Adrenal gland (tissue), 19 donors: ENCODE measurements at regions of chr6 and their contacts with region 1.

Region 1: DNA sequence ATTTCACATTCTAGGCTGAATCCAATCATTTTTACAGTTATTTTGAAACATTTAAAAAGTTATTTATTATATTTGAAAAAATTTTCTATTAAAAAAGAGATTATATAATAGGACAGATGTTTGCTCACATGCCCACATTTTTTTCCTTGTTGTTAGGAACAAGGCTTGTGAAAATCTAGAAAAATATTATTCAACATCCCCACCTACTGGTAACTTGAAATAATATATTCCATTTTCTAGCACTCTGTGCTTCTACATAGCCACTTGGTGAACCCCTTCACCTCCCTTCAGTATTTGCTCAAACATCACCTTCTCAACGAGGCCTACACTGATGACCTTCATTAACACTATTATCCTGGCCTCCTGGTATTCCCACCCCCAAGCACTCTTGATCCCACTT is 18.3 kb upstream of the GPRC6A start:
- DNase-seq: no peak
- H3K4me3 ChIP-seq: no peak overlapping the region
- H3K27ac ChIP-seq: no peak overlapping the region
- H3K4me1 ChIP-seq: no peaks in the 10 kb centered on the region
- H3K27me3 ChIP-seq: no peaks in the 10 kb centered on the region
- CTCF ChIP-seq: peak; percentile 22 to 56 (median 43)
- POLR2A ChIP-seq: no peak

Region 2: GRCh38 chr6:116779573-116780164 is 67.6 kb before region 1 on chr6:
- intact Hi-C with region 1: loop called (anchors 2 to 10 kb)
- DNase-seq: no peak
- H3K4me3 ChIP-seq: peak overlapping the region in 1 of 4 donors; percentile 2
- H3K27ac ChIP-seq: no peak overlapping the region
- H3K4me1 ChIP-seq: no peaks in the 10 kb centered on the region
- H3K27me3 ChIP-seq: no peaks in the 10 kb centered on the region
- CTCF ChIP-seq: peak; percentile 38 to 65 (median 54)
- POLR2A ChIP-seq: no peak